ENCODE measurements at regions of chr20 and their contacts with region 1.

Region 1: GRCh38 chr20:57654363-57654997 is 34.3 kb upstream of the ZBP1 start:
- DNase-seq: peak; percentile 32 to 82 (median 62)
- ATAC-seq: peak; percentile 74
- H3K4me3 ChIP-seq: no peak overlapping the region
- H3K4me3 Mint-ChIP-seq: no peak overlapping the region
- H3K27ac ChIP-seq: no peak overlapping the region
- H3K27ac Mint-ChIP-seq: no peak overlapping the region
- H3K4me1 ChIP-seq: peaks cover 39% of the 10 kb centered on the region
- H3K4me1 Mint-ChIP-seq: peaks cover 38% of the 10 kb centered on the region
- H3K27me3 ChIP-seq: no peaks in the 10 kb centered on the region
- H3K27me3 Mint-ChIP-seq: no peaks in the 10 kb centered on the region
- CTCF ChIP-seq: peak; percentile 94

Region 2: GRCh38 chr20:57628047-57628961 is 26.2 kb before region 1 on chr20:
- CTCF ChIA-PET with region 1: interaction called, 103 read pairs
- POLR2A ChIA-PET with region 1: interaction called, 9 read pairs
- intact Hi-C with region 1: loop called in 1 of 2 experiments (anchors 2 kb)
- DNase-seq: peak; percentile 40 to 92 (median 67)
- ATAC-seq: peak; percentile 80
- H3K4me3 ChIP-seq: peak overlapping the region; percentile 31 to 44
- H3K4me3 Mint-ChIP-seq: peak overlapping the region; percentile 94
- H3K27ac ChIP-seq: peak overlapping the region; percentile 71 to 91
- H3K27ac Mint-ChIP-seq: peak overlapping the region; percentile 99
- H3K4me1 ChIP-seq: peaks cover 61% of the 10 kb centered on the region
- H3K4me1 Mint-ChIP-seq: peaks cover 74% of the 10 kb centered on the region
- H3K27me3 ChIP-seq: no peaks in the 10 kb centered on the region
- H3K27me3 Mint-ChIP-seq: no peaks in the 10 kb centered on the region
- CTCF ChIP-seq: no peak

Region 3: GRCh38 chr20:57633945-57634491 is 20.5 kb before region 1 on chr20:
- CTCF ChIA-PET with region 1: interaction called, 26 read pairs
- POLR2A ChIA-PET with region 1: interaction called, 7 read pairs
- intact Hi-C with region 1: no loop called
- DNase-seq: peak in 4 of 9 experiments; percentile 25 to 72 (median 56)
- ATAC-seq: peak; percentile 56
- H3K4me3 ChIP-seq: no peak overlapping the region
- H3K4me3 Mint-ChIP-seq: peak overlapping the region; percentile 4
- H3K27ac ChIP-seq: no peak overlapping the region
- H3K27ac Mint-ChIP-seq: peak overlapping the region; percentile 25
- H3K4me1 ChIP-seq: peaks cover 39% of the 10 kb centered on the region
- H3K4me1 Mint-ChIP-seq: peaks cover 54% of the 10 kb centered on the region
- H3K27me3 ChIP-seq: no peaks in the 10 kb centered on the region
- H3K27me3 Mint-ChIP-seq: no peaks in the 10 kb centered on the region
- CTCF ChIP-seq: no peak

Region 4: DNA sequence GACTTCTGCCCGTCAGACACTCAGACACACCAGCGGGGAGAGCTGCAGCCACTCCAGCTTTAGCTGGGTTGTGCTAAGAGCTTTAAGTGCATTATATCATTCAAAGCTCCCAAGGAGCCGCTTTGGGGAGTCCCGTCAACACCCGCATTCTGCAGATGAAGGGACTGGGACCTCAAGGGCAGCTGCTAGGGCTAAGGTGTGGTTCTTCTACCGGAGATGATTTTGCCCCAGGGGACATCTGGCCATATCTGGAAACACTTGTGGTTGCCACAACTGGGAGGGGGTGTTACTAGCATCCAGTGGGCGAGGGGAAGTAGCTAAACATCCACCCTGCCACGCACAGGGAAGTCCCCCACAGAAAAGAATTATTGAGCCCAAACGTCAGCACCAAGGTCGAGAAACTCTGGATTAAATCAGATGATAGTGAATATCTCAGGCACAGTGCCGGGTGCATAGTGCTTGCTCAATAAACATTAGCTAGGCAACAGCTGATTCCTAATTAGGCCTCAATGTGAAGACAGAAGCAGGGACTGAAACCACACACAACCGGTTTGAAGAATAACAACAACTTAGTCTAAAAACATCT is 25.7 kb after region 1 on chr20:
- CTCF ChIA-PET with region 1: interaction called, 32 read pairs
- POLR2A ChIA-PET with region 1: interaction called, 4 read pairs
- intact Hi-C with region 1: loop called (anchors 1 to 2 kb)
- DNase-seq: peak in 3 of 9 experiments; percentile 25 to 60 (median 38)
- ATAC-seq: peak; percentile 11
- H3K4me3 ChIP-seq: no peak overlapping the region
- H3K4me3 Mint-ChIP-seq: no peak overlapping the region
- H3K27ac ChIP-seq: no peak overlapping the region
- H3K27ac Mint-ChIP-seq: peak overlapping the region; percentile 25
- H3K4me1 ChIP-seq: peaks cover 23% of the 10 kb centered on the region
- H3K4me1 Mint-ChIP-seq: peaks cover 39% of the 10 kb centered on the region
- H3K27me3 ChIP-seq: no peaks in the 10 kb centered on the region
- H3K27me3 Mint-ChIP-seq: peaks cover 2% of the 10 kb centered on the region
- CTCF ChIP-seq: no peak

Region 5: DNA sequence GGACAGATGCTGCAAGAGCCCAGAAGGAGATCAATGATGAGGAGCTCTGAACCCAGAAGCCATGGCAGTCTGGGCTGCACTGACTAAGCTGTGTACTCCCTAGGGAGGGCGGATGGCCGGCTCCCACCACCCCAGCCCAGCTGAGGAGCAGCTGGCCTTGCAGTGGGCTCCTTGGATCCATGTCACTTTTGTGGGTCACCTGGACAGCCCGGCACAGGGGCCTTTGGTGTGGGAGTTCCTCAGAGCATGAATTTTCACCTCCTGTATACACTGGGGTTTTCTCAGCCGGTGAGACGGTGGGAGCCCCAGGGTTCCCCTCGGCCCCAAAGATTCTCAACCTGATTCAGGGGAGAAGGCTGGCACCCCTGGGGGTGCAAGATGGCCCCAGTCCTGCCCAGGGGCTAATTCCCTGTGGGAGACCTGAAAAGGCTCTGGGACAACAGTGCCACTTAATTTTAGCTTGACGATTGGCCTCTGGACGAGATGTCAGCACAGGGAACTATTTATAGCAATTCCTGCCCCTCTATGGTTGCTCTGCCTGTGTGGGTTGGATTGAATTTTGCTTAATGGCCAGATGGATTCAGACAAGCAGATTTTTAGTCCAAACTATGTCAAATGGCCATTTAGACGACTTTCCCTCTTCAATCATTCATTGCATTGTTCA is 177.0 kb after region 1 on chr20:
- CTCF ChIA-PET with region 1: no interaction called
- POLR2A ChIA-PET with region 1: no interaction called
- intact Hi-C with region 1: no loop called
- DNase-seq: no peak
- ATAC-seq: no peak
- H3K4me3 ChIP-seq: no peak overlapping the region
- H3K4me3 Mint-ChIP-seq: no peak overlapping the region
- H3K27ac ChIP-seq: no peak overlapping the region
- H3K27ac Mint-ChIP-seq: no peak overlapping the region
- H3K4me1 ChIP-seq: no peaks in the 10 kb centered on the region
- H3K4me1 Mint-ChIP-seq: no peaks in the 10 kb centered on the region
- H3K27me3 ChIP-seq: no peaks in the 10 kb centered on the region
- H3K27me3 Mint-ChIP-seq: peaks cover 2% of the 10 kb centered on the region
- CTCF ChIP-seq: no peak

Region 6: DNA sequence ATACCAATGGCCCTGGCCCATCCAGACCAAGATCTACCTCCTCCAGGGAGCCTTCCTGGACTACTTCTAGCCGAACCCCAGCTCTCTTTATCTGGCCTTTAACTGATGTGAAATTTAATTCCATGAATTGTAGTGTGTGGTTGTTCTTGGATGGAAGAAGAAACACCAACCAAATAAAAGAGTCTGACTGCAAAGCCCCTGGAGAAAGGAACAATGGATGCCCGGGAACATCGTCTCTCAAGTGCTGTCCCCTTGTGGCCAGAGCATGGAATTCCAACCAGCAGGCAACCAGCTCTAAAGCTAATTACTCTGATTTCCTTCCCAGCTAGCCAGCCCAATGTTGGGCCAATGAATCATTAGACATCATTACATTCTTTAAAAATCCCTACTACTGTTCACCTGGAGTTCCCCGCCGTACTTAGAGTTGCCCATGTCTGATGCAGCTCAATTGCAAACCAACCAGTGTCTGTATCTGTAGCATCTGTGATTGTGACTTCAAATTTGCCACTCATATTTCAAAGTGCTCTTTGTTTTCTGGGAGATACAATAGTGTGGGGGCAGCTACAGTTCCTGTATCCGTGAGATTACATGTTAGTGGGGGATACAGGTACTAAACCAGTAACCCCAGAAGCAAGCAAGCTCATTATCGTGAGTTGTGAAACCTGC is 432.8 kb after region 1 on chr20:
- CTCF ChIA-PET with region 1: interaction called, 4 read pairs
- POLR2A ChIA-PET with region 1: no interaction called
- intact Hi-C with region 1: loop called in 1 of 2 experiments (anchors 1 kb)
- DNase-seq: peak in 3 of 9 experiments; percentile 6 to 44 (median 17)
- ATAC-seq: no peak
- H3K4me3 ChIP-seq: no peak overlapping the region
- H3K4me3 Mint-ChIP-seq: no peak overlapping the region
- H3K27ac ChIP-seq: no peak overlapping the region
- H3K27ac Mint-ChIP-seq: no peak overlapping the region
- H3K4me1 ChIP-seq: no peaks in the 10 kb centered on the region
- H3K4me1 Mint-ChIP-seq: no peaks in the 10 kb centered on the region
- H3K27me3 ChIP-seq: no peaks in the 10 kb centered on the region
- H3K27me3 Mint-ChIP-seq: peaks cover 14% of the 10 kb centered on the region
- CTCF ChIP-seq: peak; percentile 24

Region 7: GRCh38 chr20:58179432-58180099 is 525.1 kb after region 1 on chr20:
- CTCF ChIA-PET with region 1: interaction called, 11 read pairs
- POLR2A ChIA-PET with region 1: no interaction called
- intact Hi-C with region 1: loop called (anchors 1 kb)
- DNase-seq: peak; percentile 52 to 83 (median 66)
- ATAC-seq: peak; percentile 98
- H3K4me3 ChIP-seq: peak overlapping the region; percentile 26 to 48
- H3K4me3 Mint-ChIP-seq: peak overlapping the region; percentile 68
- H3K27ac ChIP-seq: no peak overlapping the region
- H3K27ac Mint-ChIP-seq: no peak overlapping the region
- H3K4me1 ChIP-seq: peaks cover 9% of the 10 kb centered on the region
- H3K4me1 Mint-ChIP-seq: peaks cover 8% of the 10 kb centered on the region
- H3K27me3 ChIP-seq: peaks cover 3 to 6% of the 10 kb centered on the region in 2 experiments
- H3K27me3 Mint-ChIP-seq: peaks cover 24% of the 10 kb centered on the region
- CTCF ChIP-seq: peak; percentile 100